AG04449 (cell line): ENCODE measurements at regions of chr4 and their contacts with region 1.

Region 1: DNA sequence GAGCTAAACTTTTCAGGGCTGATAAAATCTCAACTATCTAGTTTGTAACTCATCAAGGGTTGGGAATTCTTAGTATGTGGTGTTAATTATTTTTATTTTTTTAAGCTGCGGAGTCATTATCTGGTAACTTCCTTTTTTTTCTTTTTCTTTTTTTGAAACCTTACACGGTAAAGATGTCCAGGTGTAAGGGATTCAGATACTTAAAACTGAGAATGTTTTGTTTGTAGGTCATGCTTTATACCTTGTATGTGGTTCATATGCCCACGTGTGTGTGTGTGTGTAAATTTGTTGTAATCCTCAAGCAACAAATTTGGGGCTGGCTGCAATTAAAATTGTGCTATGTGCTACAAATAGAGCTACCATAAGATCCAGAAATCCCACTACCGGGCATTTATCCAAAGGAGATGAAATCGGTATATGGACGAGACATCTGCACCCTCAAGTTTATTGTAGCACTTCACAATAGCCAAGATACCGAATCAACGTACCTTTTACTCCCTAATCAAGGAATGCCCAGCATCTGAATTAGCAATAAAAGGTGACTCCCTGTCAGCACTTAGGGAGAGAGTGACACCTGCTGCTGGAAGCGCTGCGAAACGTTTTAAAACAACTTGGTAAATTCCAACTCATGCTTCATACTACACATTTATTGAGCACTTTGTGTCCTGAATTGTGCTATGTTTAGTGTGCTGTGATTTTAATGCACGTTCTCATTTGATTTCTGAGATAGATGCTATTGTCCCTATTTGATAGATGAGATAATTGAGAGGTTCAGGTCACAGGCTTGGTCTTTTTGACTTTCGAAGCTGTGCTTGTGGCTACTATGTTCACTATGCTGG is 16.1 kb downstream of the MSMO1 start:
- DNase-seq: no peak
- H3K4me3 ChIP-seq: no peak overlapping the region
- CTCF ChIP-seq: peak; percentile 23

Region 2: GRCh38 chr4:165016971-165017370 is 326.6 kb before region 1 on chr4:
- CTCF ChIA-PET with region 1: no interaction called
- POLR2A ChIA-PET with region 1: no interaction called
- DNase-seq: no peak
- H3K4me3 ChIP-seq: no peak overlapping the region
- CTCF ChIP-seq: no peak

Region 3: DNA sequence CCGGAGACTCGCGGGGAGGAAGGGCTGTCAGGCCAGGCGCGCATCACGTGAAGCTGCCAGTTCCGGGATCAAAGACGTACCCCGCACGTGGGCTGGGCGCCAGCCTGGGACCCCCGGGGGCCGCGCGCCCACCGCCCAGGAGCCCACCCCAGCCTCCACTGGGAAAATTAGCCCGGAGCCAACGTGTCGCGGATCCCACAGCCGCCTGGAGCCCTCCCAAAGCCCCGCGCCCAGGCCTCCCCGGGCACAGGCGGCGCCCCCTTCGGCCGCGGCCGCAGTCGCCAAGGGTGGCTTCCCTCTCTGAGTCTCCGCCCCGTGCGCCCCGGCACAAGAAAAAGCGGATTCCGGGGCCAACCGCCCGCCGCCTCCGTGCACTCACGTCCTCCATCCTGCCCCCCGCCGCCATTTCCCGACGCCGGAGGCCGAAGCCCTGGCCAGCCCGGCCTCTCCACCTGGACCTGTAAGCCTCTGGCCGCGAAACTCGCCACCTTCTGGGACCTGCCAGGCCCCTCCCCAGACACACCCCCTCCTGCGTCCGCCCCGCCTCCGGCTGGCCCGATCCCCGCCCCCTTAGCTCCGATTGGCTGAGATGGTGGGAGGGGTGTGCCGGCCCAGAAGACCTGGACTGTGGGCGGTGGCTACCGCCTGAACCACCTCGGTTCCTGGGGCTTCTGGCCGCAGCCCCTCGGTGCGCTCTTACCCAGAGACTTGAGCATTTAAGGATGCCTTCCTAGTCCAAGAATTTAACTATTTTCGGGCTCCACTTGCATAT is 231.0 kb before region 1 on chr4 and contains the start of gene TMEM192:
- CTCF ChIA-PET with region 1: interaction called, 11 read pairs
- POLR2A ChIA-PET with region 1: no interaction called
- DNase-seq: no peak
- H3K4me3 ChIP-seq: peak within 1 kb of the TSS; percentile 89
- CTCF ChIP-seq: peak; percentile 55

Region 4: DNA sequence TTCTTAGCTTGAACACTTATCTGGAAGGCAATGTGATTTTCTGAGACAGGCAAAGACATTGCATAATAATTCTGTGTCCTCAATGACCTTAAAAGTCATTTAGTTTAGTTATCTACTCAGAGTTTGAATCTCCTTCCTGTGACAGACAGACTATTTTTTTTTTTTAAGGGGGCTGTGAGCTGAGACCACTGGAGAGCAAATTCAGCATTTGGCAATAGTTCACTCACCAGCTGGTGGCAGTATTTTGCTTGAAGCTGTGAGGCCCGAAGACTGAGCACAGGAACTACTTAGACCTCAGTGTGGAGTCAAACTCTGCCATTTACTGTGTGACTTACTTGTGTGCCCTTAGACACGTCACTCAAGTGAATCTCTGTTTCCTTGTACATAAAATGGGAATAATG is 12.3 kb after region 1 on chr4:
- CTCF ChIA-PET with region 1: interaction called, 22 read pairs
- POLR2A ChIA-PET with region 1: no interaction called
- DNase-seq: no peak
- H3K4me3 ChIP-seq: no peak overlapping the region
- CTCF ChIP-seq: peak; percentile 32

Region 5: DNA sequence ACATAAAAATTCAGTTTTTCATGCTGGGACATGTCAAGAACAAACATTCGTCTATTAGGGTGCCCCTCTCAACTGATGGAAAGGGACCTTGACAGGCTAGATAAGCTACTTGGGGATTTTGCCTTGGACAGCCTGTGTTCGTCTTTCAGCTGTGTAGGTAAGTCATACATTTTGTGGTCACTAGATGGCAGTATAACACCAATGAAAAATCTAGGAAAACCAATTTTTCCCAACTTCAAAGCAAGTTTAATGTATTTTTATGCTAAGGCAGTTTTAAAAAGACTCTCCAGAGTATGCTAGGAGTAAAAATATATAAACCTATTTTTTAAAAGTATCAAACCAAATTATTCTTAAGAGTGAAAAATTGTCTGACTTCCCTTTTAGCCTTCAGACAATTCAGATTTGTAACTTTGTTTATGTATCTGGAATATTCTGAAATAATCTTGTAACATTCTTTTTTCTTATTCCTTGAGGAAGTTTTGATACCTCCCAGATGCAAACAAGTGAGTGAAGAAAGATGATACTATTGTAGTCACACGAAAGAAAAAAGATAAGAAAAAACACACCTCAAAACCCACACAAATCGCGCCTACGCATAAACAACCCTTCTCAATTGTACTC is 193.6 kb after region 1 on chr4:
- CTCF ChIA-PET with region 1: no interaction called
- POLR2A ChIA-PET with region 1: no interaction called
- DNase-seq: peak; percentile 3
- H3K4me3 ChIP-seq: no peak overlapping the region
- CTCF ChIP-seq: peak; percentile 33